ENCODE measurements at regions of chr4 and their contacts with region 1.

Region 1: GRCh38 chr4:168831919-168832762 is 177.9 kb downstream of the CBR4 start:
- DNase-seq: peak; percentile 68
- ATAC-seq: peak; percentile 83
- H3K4me3 ChIP-seq: peak overlapping the region; percentile 48 to 69 (median 57)
- H3K4me3 Mint-ChIP-seq: peak overlapping the region; percentile 91
- H3K27ac ChIP-seq: no peak overlapping the region
- H3K27ac Mint-ChIP-seq: no peak overlapping the region
- H3K4me1 ChIP-seq: peaks cover 24 to 26% of the 10 kb centered on the region in 2 donors
- H3K4me1 Mint-ChIP-seq: peaks cover 20% of the 10 kb centered on the region
- H3K27me3 ChIP-seq: peaks cover 0 to 37% (median 32%) of the 10 kb centered on the region in 4 experiments
- H3K27me3 Mint-ChIP-seq: peaks cover 59% of the 10 kb centered on the region
- CTCF ChIP-seq: no peak

Region 2: GRCh38 chr4:168817370-168817769 is 14.8 kb before region 1 on chr4:
- CTCF ChIA-PET with region 1: no interaction called
- POLR2A ChIA-PET with region 1: no interaction called
- intact Hi-C with region 1: loop called (anchors 1 kb)
- DNase-seq: no peak
- ATAC-seq: no peak
- H3K4me3 ChIP-seq: no peak overlapping the region
- H3K4me3 Mint-ChIP-seq: no peak overlapping the region
- H3K27ac ChIP-seq: no peak overlapping the region
- H3K27ac Mint-ChIP-seq: no peak overlapping the region
- H3K4me1 ChIP-seq: peaks cover 4 to 5% of the 10 kb centered on the region in 2 donors
- H3K4me1 Mint-ChIP-seq: peaks cover 12% of the 10 kb centered on the region
- H3K27me3 ChIP-seq: peaks cover 0 to 10% (median 5%) of the 10 kb centered on the region in 4 experiments
- H3K27me3 Mint-ChIP-seq: peaks cover 36% of the 10 kb centered on the region
- CTCF ChIP-seq: no peak

Measured in B cell (primary cell).